ENCODE measurements at regions of chr7 and their contacts with region 1.

Region 1: DNA sequence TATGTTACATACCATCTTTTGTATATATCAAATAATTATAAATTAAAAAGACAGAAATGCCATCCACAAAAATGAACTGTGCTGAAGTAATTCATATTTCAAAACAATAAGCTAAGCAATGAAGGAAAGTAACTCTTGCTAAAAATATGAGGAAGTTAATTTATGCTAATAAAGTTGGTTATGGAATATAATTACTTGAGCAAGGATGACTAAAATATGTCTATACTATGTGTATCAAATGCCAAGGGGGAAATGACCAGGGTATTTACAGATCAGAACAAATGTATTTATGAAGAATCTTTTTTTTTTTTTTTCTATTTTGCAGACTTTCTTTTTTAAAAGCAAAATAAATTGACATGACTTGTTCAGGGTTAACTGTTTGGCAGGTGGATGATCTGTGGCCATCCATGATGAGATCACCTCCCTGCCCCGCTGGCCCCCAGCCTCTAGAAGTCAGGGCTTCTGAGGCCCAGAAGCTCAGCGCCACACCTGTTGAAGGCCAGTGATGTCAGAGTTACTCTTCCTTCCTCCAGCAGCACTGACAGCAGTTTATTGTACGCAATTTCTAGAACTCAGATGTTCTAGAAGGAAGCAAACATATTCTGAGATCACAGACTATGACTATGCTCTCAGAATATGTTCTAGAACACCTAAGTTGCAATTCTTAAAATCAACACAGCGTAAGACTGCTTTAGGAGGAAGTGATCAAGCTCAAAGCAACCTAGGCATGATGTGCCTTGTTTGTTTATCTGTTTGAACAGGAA is 196.1 kb upstream of the KLF14 start:
- DNase-seq: no peak
- H3K4me3 Mint-ChIP-seq: no peak overlapping the region
- H3K27ac Mint-ChIP-seq: peak overlapping the region; percentile 84
- H3K4me1 Mint-ChIP-seq: peaks cover 92% of the 10 kb centered on the region
- H3K27me3 Mint-ChIP-seq: no peaks in the 10 kb centered on the region

Region 2: GRCh38 chr7:130941322-130942210 is 11.5 kb after region 1 on chr7:
- CTCF ChIA-PET with region 1: interaction called, 4 read pairs
- POLR2A ChIA-PET with region 1: interaction called, 294 read pairs
- DNase-seq: no peak
- H3K4me3 Mint-ChIP-seq: peak overlapping the region; percentile 80
- H3K27ac Mint-ChIP-seq: peak overlapping the region; percentile 89
- H3K4me1 Mint-ChIP-seq: peaks cover 89% of the 10 kb centered on the region
- H3K27me3 Mint-ChIP-seq: no peaks in the 10 kb centered on the region

Measured in activated CD4-positive, alpha-beta memory T cell treated with anti-CD3 and anti-CD28 coated beads, Interleukin-2, amount 10 ng/mL, durations not matched to agents 7 days and 5 days (primary cell).